ENCODE measurements at regions of chr16 and their contacts with region 1.

Region 1: GRCh38 chr16:30112197-30113030 is 923 bp downstream of the GDPD3 start:
- DNase-seq: peak; percentile 82
- ATAC-seq: peak; percentile 83
- H3K4me3 Mint-ChIP-seq: no peak overlapping the region
- H3K27ac Mint-ChIP-seq: no peak overlapping the region
- H3K4me1 Mint-ChIP-seq: peaks cover 3% of the 10 kb centered on the region
- H3K27me3 Mint-ChIP-seq: no peaks in the 10 kb centered on the region
- CTCF ChIP-seq: peak; percentile 90

Region 2: DNA sequence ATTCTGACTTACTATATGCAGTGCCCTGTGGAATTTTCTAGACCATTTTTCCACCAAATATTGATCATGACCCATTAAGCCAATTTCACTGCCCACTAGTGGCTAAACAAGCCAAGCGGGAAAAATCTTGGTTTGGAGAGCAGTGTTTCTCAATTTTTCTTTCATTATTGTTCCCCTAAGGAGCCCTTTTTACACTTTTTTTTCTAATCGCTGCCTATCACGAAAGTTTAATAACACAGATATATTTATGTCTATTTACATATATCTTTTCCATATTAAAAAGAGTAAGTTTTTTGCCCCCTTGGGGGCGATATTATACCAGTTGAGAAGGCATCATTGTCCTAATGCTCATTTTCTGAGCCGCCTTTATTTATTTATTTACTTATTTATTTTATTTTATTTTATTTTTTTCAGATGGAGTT is 70.6 kb before region 1 on chr16:
- CTCF ChIA-PET with region 1: interaction called, 10 read pairs
- POLR2A ChIA-PET with region 1: no interaction called
- DNase-seq: no peak
- ATAC-seq: no peak
- H3K4me3 Mint-ChIP-seq: no peak overlapping the region
- H3K27ac Mint-ChIP-seq: no peak overlapping the region
- H3K4me1 Mint-ChIP-seq: no peaks in the 10 kb centered on the region
- H3K27me3 Mint-ChIP-seq: peaks cover 32% of the 10 kb centered on the region
- CTCF ChIP-seq: no peak

Region 3: DNA sequence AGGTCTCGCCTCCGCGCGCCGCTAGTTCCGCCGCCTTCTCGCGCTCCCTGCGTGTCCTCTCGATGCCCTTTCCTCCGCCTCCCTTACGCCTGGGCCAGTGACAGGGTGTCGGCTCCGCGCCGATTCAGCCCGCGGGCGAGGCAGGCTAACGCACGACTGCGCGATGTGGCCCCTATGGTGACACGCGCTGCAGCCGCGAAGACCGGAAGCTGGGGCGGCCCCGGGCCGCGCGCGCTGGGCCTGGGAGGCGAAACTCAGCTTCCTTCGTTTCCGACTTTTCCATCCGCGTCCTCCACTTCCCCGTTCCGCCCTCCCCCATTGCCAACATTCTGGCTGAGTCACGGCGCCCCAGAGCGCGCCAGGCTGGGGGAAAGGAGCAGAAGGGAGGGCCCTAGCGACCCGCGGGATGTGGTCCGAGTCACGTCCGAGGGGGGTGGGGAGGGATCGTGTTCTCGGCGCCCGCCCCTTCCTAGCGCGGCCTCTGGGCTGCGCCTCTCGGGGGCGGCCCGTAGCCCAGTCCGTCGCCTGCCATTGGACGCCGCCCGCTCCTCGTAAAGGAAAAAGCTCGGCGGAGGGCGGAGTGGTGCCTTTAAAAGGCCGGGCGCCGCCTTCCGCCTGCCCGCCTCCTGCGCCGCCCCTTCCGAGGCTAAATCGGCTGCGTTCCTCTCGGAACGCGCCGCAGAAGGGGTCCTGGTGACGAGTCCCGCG is 47.1 kb before region 1 on chr16 and contains the start of gene ALDOA:
- CTCF ChIA-PET with region 1: interaction called, 19 read pairs
- POLR2A ChIA-PET with region 1: no interaction called
- DNase-seq: peak; percentile 92
- ATAC-seq: peak; percentile 86
- H3K4me3 Mint-ChIP-seq: peak within 1 kb of the TSS; percentile 96
- H3K27ac Mint-ChIP-seq: peak within 1 kb of the TSS; percentile 99
- H3K4me1 Mint-ChIP-seq: peaks cover 37% of the 10 kb centered on the region
- H3K27me3 Mint-ChIP-seq: no peaks in the 10 kb centered on the region
- CTCF ChIP-seq: no peak
- total RNA-seq, gene ALDOA: 1,537 to 1,958 TPM (median 1,913 TPM) in 3 replicates

Region 4: DNA sequence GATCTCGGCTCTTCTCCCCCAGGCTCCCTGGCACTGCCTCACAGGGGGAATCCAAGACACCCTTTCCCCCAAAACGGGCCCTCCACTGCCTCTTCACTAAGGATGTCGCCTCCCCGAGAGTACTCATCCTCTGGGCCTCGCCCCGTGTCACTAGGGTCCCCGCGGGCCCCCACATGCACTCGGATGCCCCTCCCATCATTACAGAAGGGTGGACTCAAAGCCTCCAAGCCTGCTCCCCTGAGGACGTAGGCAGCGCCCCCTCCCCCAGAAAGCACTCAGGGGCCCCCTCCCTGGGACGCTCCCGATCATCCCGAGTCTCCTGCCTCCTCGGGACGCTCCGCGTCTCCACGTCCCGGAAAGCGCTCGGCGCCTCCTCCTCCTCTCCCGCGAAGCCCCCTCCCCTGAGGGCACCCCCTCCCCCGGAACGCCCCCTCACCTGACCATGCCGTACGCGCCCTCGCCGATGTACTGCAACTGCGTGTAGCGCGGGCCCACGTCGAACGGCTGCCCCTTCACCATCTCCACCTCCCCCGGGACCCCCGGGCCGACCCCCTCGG is 10.3 kb after region 1 on chr16:
- CTCF ChIA-PET with region 1: interaction called, 40 read pairs
- POLR2A ChIA-PET with region 1: interaction called, 3 read pairs
- DNase-seq: peak; percentile 57
- ATAC-seq: peak; percentile 58
- H3K4me3 Mint-ChIP-seq: peak overlapping the region; percentile 81
- H3K27ac Mint-ChIP-seq: no peak overlapping the region
- H3K4me1 Mint-ChIP-seq: peaks cover 5% of the 10 kb centered on the region
- H3K27me3 Mint-ChIP-seq: peaks cover 24% of the 10 kb centered on the region
- CTCF ChIP-seq: no peak

Region 5: GRCh38 chr16:30142672-30143346 is 30.4 kb after region 1 on chr16:
- CTCF ChIA-PET with region 1: interaction called, 13 read pairs
- POLR2A ChIA-PET with region 1: no interaction called
- DNase-seq: no peak
- ATAC-seq: peak; percentile 60
- H3K4me3 Mint-ChIP-seq: no peak overlapping the region
- H3K27ac Mint-ChIP-seq: no peak overlapping the region
- H3K4me1 Mint-ChIP-seq: no peaks in the 10 kb centered on the region
- H3K27me3 Mint-ChIP-seq: peaks cover 8% of the 10 kb centered on the region
- CTCF ChIP-seq: no peak

Region 6: DNA sequence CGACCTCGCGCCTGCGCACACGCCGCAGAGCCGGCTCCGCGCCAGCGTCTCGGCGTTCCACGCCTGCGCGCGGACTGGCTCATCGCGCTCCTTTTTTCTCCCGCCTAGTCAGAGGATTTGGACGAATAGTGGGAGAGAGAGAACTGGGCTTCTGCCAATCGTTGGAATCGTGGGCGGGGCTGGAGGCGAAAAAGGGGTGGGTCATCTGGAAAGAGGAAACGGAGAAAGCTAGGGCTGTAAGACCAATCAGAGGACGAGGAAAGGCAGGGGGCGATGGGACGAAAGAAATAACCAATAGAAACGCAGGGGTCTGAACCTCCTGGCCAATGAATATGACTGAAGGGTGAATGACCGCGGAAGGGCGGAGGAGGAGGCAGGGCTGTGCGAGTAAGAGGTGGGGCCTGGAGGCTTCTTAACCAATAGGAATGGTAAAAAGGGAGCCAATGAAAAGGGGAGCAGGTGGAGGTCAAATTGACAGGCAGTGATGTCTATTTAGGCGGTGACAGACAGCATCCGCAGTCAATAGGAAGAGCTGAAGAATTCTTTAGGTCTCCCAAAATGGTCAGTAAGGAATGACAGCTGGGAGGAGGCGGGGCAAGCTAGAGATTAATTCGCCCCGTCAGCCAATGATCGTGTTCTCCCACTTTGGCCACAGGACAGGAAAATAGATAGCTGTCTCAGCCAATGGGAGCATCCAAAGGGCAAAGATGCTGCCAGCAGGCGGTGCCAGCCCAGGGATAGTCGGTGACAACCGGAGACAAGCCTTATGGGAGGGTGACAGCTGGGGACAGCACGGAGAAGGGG is 258.2 kb after region 1 on chr16 and contains the start of gene TBC1D10B:
- CTCF ChIA-PET with region 1: interaction called, 28 read pairs
- POLR2A ChIA-PET with region 1: no interaction called
- DNase-seq: peak; percentile 99
- ATAC-seq: peak; percentile 91
- H3K4me3 Mint-ChIP-seq: peak within 1 kb of the TSS; percentile 80
- H3K27ac Mint-ChIP-seq: peak within 1 kb of the TSS; percentile 57
- H3K4me1 Mint-ChIP-seq: peaks cover 37% of the 10 kb centered on the region
- H3K27me3 Mint-ChIP-seq: no peaks in the 10 kb centered on the region; the same call in 1 of the 2 replicates
- CTCF ChIP-seq: no peak
- total RNA-seq, gene TBC1D10B: 33.4 to 40.5 TPM (median 34.6 TPM) in 3 replicates

Region 7: DNA sequence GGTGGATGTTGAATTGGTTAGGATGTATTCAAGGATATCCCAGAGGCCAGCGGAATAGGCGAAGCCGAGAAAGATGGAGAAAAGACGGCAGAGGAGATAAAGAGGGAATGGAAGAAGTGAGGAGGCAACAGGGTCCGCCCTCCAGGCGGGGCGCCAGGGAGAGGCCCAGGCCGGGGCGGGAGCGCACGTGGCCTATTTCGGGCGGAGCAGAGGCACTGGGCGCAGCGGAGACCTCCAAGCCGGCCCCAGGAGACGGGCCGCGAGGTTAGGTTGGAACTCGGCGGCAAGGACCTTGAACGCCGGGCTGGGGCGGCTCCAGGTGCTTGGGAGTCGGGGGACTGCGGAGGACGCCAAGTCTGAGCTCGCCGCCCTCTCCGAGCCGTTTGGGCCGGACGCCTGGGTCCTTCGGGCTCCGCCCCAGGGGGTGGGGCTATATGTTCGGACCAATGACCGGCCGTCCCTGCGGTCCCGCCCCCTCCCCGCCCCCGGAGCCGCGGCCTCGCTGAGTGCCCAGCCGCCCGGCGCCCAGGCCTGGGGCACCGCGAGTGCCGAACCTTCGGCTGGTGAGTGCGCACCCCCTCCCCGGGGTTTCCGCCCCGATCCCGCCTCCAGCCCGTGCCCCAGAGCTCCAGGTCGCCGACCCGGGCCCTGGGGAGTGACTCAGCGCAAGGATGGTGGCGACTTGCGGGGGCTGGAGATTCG is 294.8 kb after region 1 on chr16 and contains the start of gene ZNF771:
- CTCF ChIA-PET with region 1: interaction called, 20 read pairs
- POLR2A ChIA-PET with region 1: no interaction called
- DNase-seq: peak; percentile 96
- ATAC-seq: peak; percentile 84
- H3K4me3 Mint-ChIP-seq: peak within 1 kb of the TSS; percentile 90
- H3K27ac Mint-ChIP-seq: peak within 1 kb of the TSS; percentile 93
- H3K4me1 Mint-ChIP-seq: peaks cover 20% of the 10 kb centered on the region
- H3K27me3 Mint-ChIP-seq: peaks cover 21% of the 10 kb centered on the region
- CTCF ChIP-seq: no peak
- total RNA-seq, gene ZNF771: 10.0 to 12.5 TPM (median 11.3 TPM) in 3 replicates

Region 8: DNA sequence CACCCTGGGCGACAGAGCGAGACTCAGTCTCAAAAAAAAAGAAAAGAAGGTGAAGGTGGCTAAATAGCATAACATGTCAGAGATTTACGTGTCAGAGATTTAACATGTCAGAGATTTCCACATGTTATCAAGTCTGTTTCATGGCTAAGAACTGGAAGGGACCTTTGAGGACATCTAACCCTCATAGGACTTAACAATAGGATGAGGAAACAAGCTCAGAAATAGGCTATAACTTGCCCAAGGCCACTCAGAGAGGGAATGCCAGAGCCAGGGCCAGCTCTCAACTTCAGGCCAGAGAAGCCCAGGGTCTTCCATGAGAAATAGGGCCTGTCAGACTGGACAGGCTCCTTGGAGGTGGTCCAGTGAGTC is 701.4 kb after region 1 on chr16:
- CTCF ChIA-PET with region 1: no interaction called
- POLR2A ChIA-PET with region 1: no interaction called
- DNase-seq: no peak
- ATAC-seq: no peak
- H3K4me3 Mint-ChIP-seq: peak overlapping the region; percentile 65
- H3K27ac Mint-ChIP-seq: no peak overlapping the region
- H3K4me1 Mint-ChIP-seq: peaks cover 6% of the 10 kb centered on the region; the same call in 1 of the 2 replicates
- H3K27me3 Mint-ChIP-seq: peaks cover 38% of the 10 kb centered on the region
- CTCF ChIP-seq: no peak